ENCODE measurements at regions of chr1 and their contacts with region 1.

Region 1: GRCh38 chr1:70528590-70529333 is 117.7 kb downstream of the CTH start:
- DNase-seq: peak in 1 of 5 donors; percentile 9
- ATAC-seq: peak in 3 of 4 donors; percentile 58 to 86 (median 60)
- H3K4me3 ChIP-seq: no peak overlapping the region
- H3K27ac ChIP-seq: no peak overlapping the region
- H3K4me1 ChIP-seq: no peaks in the 10 kb centered on the region
- H3K27me3 ChIP-seq: peaks cover 0 to 8% (median 0%) of the 10 kb centered on the region in 9 donors
- CTCF ChIP-seq: peak; percentile 32 to 73 (median 56)
- POLR2A ChIP-seq: no peak

Region 2: GRCh38 chr1:70436622-70437251 is 92.0 kb before region 1 on chr1:
- intact Hi-C with region 1: no loop called
- DNase-seq: no peak
- ATAC-seq: peak in 2 of 4 donors; percentile 36 to 45
- H3K4me3 ChIP-seq: no peak overlapping the region
- H3K27ac ChIP-seq: no peak overlapping the region
- H3K4me1 ChIP-seq: peaks cover 0 to 13% (median 4%) of the 10 kb centered on the region in 12 donors
- H3K27me3 ChIP-seq: no peaks in the 10 kb centered on the region
- CTCF ChIP-seq: peak in 10 of 12 donors; percentile 27 to 64 (median 43)
- POLR2A ChIP-seq: no peak

Region 3: GRCh38 chr1:70896224-70896623 is 367.5 kb after region 1 on chr1:
- intact Hi-C with region 1: loop called in 1 of 10 experiments (anchors 10 kb)
- DNase-seq: no peak
- ATAC-seq: no peak
- H3K4me3 ChIP-seq: no peak overlapping the region
- H3K27ac ChIP-seq: no peak overlapping the region
- H3K4me1 ChIP-seq: peaks cover 0 to 18% (median 5%) of the 10 kb centered on the region in 12 donors
- H3K27me3 ChIP-seq: no peaks in the 10 kb centered on the region
- CTCF ChIP-seq: peak in 4 of 12 donors; percentile 8 to 23 (median 18)
- POLR2A ChIP-seq: no peak

Region 4: GRCh38 chr1:71049951-71050598 is 521.3 kb after region 1 on chr1:
- intact Hi-C with region 1: loop called (anchors 2 to 5 kb)
- DNase-seq: no peak
- ATAC-seq: peak in 3 of 4 donors; percentile 56 to 68 (median 61)
- H3K4me3 ChIP-seq: no peak overlapping the region
- H3K27ac ChIP-seq: no peak overlapping the region
- H3K4me1 ChIP-seq: peaks cover 0 to 20% (median 8%) of the 10 kb centered on the region in 12 donors
- H3K27me3 ChIP-seq: peaks cover 6 to 49% (median 26%) of the 10 kb centered on the region in 9 donors
- CTCF ChIP-seq: peak; percentile 62 to 86 (median 72)
- POLR2A ChIP-seq: no peak

Measured in heart left ventricle (tissue), 16 donors.